ENCODE measurements at regions of chr6 and their contacts with region 1.

Region 1: GRCh38 chr6:43386492-43386891 is 17.0 kb upstream of the ZNF318 start:
- DNase-seq: peak in 1 of 35 experiments; percentile 52
- ATAC-seq: no peak
- H3K4me3 ChIP-seq: no peak overlapping the region
- H3K4me3 Mint-ChIP-seq: no peak overlapping the region
- H3K27ac ChIP-seq: no peak overlapping the region
- H3K27ac Mint-ChIP-seq: peak overlapping the region; percentile 8 to 9
- H3K4me1 ChIP-seq: peaks cover 44 to 51% of the 10 kb centered on the region in 2 experiments
- H3K4me1 Mint-ChIP-seq: peaks cover 67 to 78% (median 72%) of the 10 kb centered on the region in 3 donors
- H3K27me3 ChIP-seq: no peaks in the 10 kb centered on the region
- H3K27me3 Mint-ChIP-seq: peaks cover 0 to 12% of the 10 kb centered on the region in 2 donors

Region 2: GRCh38 chr6:43402820-43403219 is 16.3 kb after region 1 on chr6:
- CTCF ChIA-PET with region 1: interaction called in 1 of 2 experiments, 11 read pairs
- POLR2A ChIA-PET with region 1: no interaction called
- DNase-seq: no peak
- ATAC-seq: no peak
- H3K4me3 ChIP-seq: no peak overlapping the region
- H3K4me3 Mint-ChIP-seq: no peak overlapping the region
- H3K27ac ChIP-seq: no peak overlapping the region
- H3K27ac Mint-ChIP-seq: no peak overlapping the region
- H3K4me1 ChIP-seq: no peaks in the 10 kb centered on the region
- H3K4me1 Mint-ChIP-seq: peaks cover 0 to 3% (median 2%) of the 10 kb centered on the region in 3 donors
- H3K27me3 ChIP-seq: peaks cover 0 to 3% of the 10 kb centered on the region in 2 experiments
- H3K27me3 Mint-ChIP-seq: peaks cover 24% of the 10 kb centered on the region in 2 donors

Region 3: DNA sequence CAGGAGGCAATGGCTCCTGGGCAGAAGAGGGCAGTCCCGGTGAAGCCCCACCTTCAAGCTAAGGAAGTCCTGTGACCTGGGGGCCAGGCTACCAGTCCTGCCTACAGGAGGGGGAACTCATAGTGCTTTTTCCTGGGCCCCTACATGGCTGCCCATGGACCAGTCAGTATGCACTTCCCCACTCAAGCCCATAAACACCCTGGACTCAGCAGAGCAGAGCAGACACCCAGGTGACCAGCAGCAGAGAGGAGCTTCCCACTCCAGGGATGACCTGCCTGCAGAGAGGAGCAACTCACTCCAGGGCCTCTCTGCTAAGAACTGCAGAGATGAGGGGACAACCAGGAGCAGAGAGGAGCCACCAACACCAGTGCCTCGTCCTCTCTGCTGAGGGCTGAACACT is 26.5 kb after region 1 on chr6:
- CTCF ChIA-PET with region 1: no interaction called
- POLR2A ChIA-PET with region 1: no interaction called
- DNase-seq: no peak
- ATAC-seq: no peak
- H3K4me3 ChIP-seq: no peak overlapping the region
- H3K4me3 Mint-ChIP-seq: no peak overlapping the region
- H3K27ac ChIP-seq: no peak overlapping the region
- H3K27ac Mint-ChIP-seq: no peak overlapping the region
- H3K4me1 ChIP-seq: no peaks in the 10 kb centered on the region
- H3K4me1 Mint-ChIP-seq: no peaks in the 10 kb centered on the region
- H3K27me3 ChIP-seq: peaks cover 0 to 12% of the 10 kb centered on the region in 2 experiments
- H3K27me3 Mint-ChIP-seq: peaks cover 4 to 5% of the 10 kb centered on the region in 2 donors

Region 4: GRCh38 chr6:43427406-43428111 is 41.1 kb after region 1 on chr6 and contains the start of gene ABCC10:
- CTCF ChIA-PET with region 1: interaction called in 1 of 2 experiments, 10 read pairs
- POLR2A ChIA-PET with region 1: no interaction called
- DNase-seq: peak; percentile 77 to 98 (median 95)
- ATAC-seq: peak; percentile 89 to 95 (median 92)
- H3K4me3 ChIP-seq: peak within 1 kb of the TSS; percentile 81 to 92
- H3K4me3 Mint-ChIP-seq: peak within 1 kb of the TSS; percentile 92 to 94 (median 92)
- H3K27ac ChIP-seq: peak within 1 kb of the TSS; percentile 90
- H3K27ac Mint-ChIP-seq: peak within 1 kb of the TSS; percentile 94
- H3K4me1 ChIP-seq: peaks cover 9 to 31% of the 10 kb centered on the region in 2 experiments
- H3K4me1 Mint-ChIP-seq: peaks cover 28 to 36% (median 31%) of the 10 kb centered on the region in 3 donors
- H3K27me3 ChIP-seq: no peaks in the 10 kb centered on the region
- H3K27me3 Mint-ChIP-seq: no peaks in the 10 kb centered on the region
- total RNA-seq, gene ABCC10: 57.8 to 85.4 (median 75.5) TPM

Measured in T-cell (primary cell).